GM12878 (cell line): ENCODE measurements at regions of chr12 and their contacts with region 1.

Region 1: DNA sequence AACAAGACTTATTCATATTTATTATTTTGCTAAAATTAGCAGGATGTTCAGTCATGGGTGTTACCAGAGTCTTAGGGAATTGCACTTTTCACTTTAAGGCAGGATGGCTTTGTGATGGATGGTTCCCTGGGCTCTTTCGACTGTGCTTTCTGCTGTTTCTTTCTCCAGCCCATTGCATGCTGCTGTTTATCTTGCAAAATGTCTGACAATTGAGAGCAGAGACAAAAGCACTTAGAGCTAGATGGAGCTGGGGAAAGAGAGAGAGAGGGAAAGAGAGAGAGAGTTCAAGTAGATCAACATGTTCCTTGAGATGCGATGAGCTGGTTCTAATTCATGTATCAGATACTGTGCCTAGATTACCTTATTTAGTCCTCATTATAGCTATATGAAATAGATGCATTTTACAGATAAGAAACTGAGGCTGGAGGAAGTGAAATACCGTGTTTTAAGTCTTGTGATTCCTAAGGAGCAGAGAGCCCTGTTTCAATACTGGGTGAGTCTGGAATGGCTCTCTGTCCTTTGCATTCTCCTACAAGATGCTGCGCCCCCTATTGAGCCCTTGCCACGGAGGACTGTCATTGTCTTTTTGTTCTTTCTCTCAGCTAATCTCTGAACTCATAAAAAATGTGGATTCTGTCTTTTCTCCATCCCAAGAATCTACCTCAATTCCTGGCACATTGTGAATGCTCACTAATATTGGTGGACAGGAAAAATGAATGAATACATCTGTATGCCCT is 227.9 kb downstream of the ALG10B start:
- DNase-seq: no peak
- ATAC-seq: no peak; the same call in 2 of the 3 replicates
- H3K4me3 ChIP-seq: no peak overlapping the region
- H3K27ac ChIP-seq: no peak overlapping the region
- H3K4me1 ChIP-seq: no peaks in the 10 kb centered on the region
- H3K27me3 ChIP-seq: no peaks in the 10 kb centered on the region
- CTCF ChIP-seq: 0 out of 6 replicates have a peak, but pooled peaks of 2 of the 3 experiments have one; percentile 2 to 3
- EP300 ChIP-seq: no peak
- POLR2A ChIP-seq: no peak
- RAD21 ChIP-seq: no peak

Region 2: DNA sequence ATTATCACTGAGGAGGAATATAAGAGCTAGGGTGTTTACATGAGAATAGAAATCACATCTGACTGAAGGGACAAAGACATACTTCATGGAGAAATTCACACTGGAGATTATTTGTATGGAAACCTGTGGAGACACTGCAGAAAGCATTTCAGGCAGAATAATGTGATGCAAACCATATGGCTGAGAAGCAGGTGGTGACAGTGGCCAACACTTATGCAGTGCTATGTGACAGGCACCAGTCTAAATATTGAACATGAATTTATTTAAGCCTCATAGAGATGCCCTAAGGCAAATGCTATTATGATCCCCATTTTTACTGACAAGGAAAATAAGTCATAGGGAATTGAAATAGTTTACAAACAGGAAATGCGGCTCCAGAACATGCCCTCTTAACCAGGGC is 211.7 kb before region 1 on chr12:
- CTCF ChIA-PET with region 1: interaction called, 6 read pairs
- POLR2A ChIA-PET with region 1: no interaction called
- RAD21 ChIA-PET with region 1: no interaction called
- SMC1A ChIA-PET with region 1: interaction called, 4 read pairs
- in situ Hi-C with region 1: no loop called
- intact Hi-C with region 1: loop called (anchors 10 kb)
- DNase-seq: no peak
- ATAC-seq: no peak
- H3K4me3 ChIP-seq: no peak overlapping the region
- H3K27ac ChIP-seq: no peak overlapping the region
- H3K4me1 ChIP-seq: no peaks in the 10 kb centered on the region
- H3K27me3 ChIP-seq: no peaks in the 10 kb centered on the region
- CTCF ChIP-seq: no peak
- EP300 ChIP-seq: no peak
- POLR2A ChIP-seq: no peak
- RAD21 ChIP-seq: no peak